ENCODE measurements at regions of chr6 and their contacts with region 1.

Region 1: GRCh38 chr6:107594736-107595135 is 104.8 kb downstream of the SOBP start:
- DNase-seq: no peak
- ATAC-seq: peak; percentile 70

Region 2: GRCh38 chr6:107634324-107635056 is 39.8 kb after region 1 on chr6:
- intact Hi-C with region 1: loop called (anchors 5 kb)
- DNase-seq: no peak
- ATAC-seq: peak; percentile 79

Region 3: DNA sequence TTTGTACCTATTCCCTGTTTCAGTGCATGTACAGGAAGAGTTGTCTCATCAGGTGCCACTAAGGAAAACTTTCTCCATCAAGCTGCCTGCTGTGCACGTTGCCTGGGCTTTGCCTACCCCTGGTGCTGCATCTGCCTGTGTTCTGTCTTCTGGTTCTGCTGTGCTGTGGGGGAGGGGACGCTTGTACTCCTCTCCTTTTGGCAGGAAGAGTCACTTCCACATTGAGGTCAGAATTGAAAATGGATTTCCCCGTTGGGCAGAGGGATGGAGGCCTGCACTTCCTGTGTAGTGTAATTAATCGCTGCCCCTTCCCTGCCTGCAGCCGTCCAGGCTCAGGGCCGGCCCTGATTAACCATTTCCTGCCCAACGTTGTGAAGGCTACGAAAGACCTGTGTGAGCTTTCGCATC is 76.1 kb after region 1 on chr6:
- intact Hi-C with region 1: no loop called
- DNase-seq: peak; percentile 79
- ATAC-seq: peak; percentile 47

Region 4: GRCh38 chr6:107843400-107843799 is 248.7 kb after region 1 on chr6:
- intact Hi-C with region 1: no loop called
- DNase-seq: no peak
- ATAC-seq: no peak